Transverse colon (tissue), 4 donors: ENCODE measurements at regions of chr19 and their contacts with region 1.

Region 1: DNA sequence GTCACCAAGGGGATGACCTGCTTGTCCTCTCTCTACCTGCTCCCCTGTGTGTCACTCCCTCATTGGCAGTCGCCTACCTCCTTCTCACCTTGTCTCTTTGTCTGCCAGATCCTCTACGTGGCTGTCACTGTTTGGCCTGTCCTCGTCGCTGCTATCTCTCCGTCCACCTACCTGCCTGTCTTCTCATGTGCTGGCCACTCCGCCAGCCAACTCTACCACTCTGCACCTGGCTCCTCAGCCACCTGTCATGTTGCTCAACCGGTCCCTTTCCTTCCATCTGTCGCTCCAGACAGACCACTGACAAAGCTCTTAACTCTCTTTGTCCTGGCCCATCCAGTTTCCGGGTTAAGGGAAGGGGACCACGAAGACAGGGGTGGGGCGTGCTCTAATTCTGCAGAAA is at the start of gene KLK12:
- DNase-seq: no peak
- H3K4me3 ChIP-seq: no peak within 1 kb of the TSS
- H3K27ac ChIP-seq: no peak within 1 kb of the TSS
- H3K4me1 ChIP-seq: no peaks in the 10 kb centered on the region
- H3K27me3 ChIP-seq: no peaks in the 10 kb centered on the region
- CTCF ChIP-seq: no peak
- EP300 ChIP-seq: no peak
- POLR2A ChIP-seq: no peak
- total RNA-seq, gene KLK12: 0.41 TPM in 1 of 4 donors, not detected in the others

Region 2: DNA sequence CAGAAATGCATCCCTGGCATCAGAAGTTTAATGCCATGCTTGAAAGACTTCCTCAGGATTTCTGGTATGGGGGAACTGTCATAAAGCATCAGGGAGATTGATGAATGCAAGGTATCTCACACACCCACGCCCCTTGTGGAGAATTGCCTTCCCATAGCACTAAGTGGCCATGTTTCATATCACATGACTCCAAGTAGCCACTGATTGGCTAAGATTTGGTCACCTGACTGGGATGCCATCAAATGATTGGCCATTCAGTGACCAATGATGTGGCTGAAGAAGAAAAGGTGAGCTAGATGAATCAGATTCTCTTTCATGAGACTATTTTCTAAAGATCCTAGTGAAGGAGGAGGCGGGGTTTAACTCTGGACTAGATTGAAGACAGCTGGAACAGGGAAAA is 40.6 kb before region 1 on chr19:
- in situ Hi-C with region 1: no loop called
- intact Hi-C with region 1: loop called (anchors 1 kb)
- DNase-seq: no peak
- H3K4me3 ChIP-seq: no peak overlapping the region
- H3K27ac ChIP-seq: no peak overlapping the region
- H3K4me1 ChIP-seq: no peaks in the 10 kb centered on the region
- H3K27me3 ChIP-seq: peaks cover 7% of the 10 kb centered on the region
- CTCF ChIP-seq: no peak
- EP300 ChIP-seq: no peak
- POLR2A ChIP-seq: no peak

Region 3: GRCh38 chr19:51158474-51159129 is 123.9 kb after region 1 on chr19:
- in situ Hi-C with region 1: no loop called
- intact Hi-C with region 1: no loop called
- DNase-seq: peak; percentile 56
- H3K4me3 ChIP-seq: no peak overlapping the region
- H3K27ac ChIP-seq: no peak overlapping the region
- H3K4me1 ChIP-seq: no peaks in the 10 kb centered on the region
- H3K27me3 ChIP-seq: no peaks in the 10 kb centered on the region
- CTCF ChIP-seq: peak; percentile 43 to 51 (median 45)
- EP300 ChIP-seq: no peak
- POLR2A ChIP-seq: no peak